ENCODE measurements at regions of chr10 and their contacts with region 1.

Region 1: DNA sequence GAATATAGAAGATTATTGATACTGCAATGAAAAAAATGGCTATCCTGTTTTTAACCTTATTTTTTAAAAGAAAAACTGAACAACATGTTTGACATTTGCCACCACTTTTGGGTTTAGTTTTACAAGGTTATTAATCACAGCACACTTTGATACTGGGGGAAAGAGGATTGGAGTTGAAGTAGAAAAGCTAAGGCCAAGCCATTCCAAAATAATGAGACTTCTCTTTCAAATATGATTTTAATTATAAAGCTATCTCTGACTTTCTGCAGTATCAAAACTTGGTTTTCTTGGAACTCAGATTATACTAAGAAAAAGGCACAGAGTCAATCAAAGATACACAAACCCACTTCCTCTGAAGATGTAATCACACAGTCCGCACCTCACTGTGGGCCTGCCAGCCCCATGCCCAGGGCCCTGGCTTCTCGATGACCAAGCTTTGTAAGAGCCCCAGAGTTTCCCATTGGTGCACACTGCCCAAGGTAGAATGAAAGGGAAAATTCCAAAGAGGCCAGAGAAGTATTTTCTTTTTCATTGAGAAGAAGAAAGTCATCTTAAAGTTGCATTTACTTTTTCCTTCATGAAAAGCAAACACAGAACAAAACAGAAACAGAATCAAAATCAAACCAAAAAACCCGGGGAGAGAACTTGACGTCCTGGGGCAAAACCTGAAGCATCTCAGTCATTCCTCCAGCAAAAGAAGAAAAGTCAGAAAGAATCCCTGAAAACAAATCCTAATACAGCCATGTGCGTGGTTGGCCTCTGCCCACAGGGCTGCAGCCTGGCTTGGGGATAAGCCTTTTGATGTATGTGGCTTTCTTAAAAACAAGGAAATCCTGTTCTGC is 187.7 kb upstream of the KLF6 start:
- DNase-seq: peak; percentile 68
- H3K4me3 Mint-ChIP-seq: peak overlapping the region; percentile 62
- H3K27ac Mint-ChIP-seq: peak overlapping the region; percentile 98
- H3K4me1 Mint-ChIP-seq: peaks cover 49% of the 10 kb centered on the region
- H3K27me3 Mint-ChIP-seq: no peaks in the 10 kb centered on the region

Region 2: DNA sequence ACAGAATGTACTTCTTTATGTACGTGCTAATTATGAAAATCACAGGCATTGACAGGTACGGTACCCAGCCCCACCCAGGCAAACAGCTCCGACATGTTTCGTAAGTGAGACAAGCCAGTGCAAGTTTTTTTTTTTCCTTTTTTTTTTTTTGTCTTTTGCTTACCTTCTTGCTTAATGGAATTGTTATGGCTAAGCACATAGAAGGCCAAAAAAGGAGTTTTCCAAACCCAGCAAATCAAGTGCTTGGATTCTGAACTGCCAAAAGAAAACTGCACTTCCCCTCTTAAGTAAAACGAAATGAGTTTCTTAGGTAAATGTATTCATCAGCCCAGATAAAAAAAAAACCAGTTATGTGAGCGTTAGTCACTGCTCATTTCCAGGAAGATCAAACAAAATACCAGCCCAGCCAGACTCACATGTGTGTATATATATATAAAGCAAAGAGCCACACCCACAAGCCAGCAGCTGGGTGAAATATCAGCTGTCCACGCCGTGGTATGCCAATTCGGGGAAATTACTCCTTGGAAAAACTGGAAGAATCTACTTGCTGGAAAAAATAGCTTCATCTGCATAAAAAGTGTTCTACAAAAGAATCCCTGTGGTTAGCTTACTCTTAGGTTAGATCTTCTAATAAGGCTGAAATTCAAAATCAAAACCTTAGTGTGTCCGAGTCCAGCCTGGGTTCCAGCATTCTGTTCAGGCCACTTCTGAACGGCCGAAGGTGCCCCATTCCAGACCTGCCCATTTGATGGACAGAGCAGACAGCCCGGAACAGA is 195.7 kb before region 1 on chr10:
- CTCF ChIA-PET with region 1: no interaction called
- POLR2A ChIA-PET with region 1: interaction called, 155 read pairs
- DNase-seq: peak; percentile 64
- H3K4me3 Mint-ChIP-seq: peak overlapping the region; percentile 47
- H3K27ac Mint-ChIP-seq: peak overlapping the region; percentile 58
- H3K4me1 Mint-ChIP-seq: peaks cover 69% of the 10 kb centered on the region
- H3K27me3 Mint-ChIP-seq: no peaks in the 10 kb centered on the region

Region 3: GRCh38 chr10:3935141-3935540 is 37.5 kb before region 1 on chr10:
- CTCF ChIA-PET with region 1: interaction called, 6 read pairs
- POLR2A ChIA-PET with region 1: interaction called, 14 read pairs
- DNase-seq: peak; percentile 81
- H3K4me3 Mint-ChIP-seq: peak overlapping the region; percentile 58
- H3K27ac Mint-ChIP-seq: peak overlapping the region; percentile 86
- H3K4me1 Mint-ChIP-seq: peaks cover 50% of the 10 kb centered on the region
- H3K27me3 Mint-ChIP-seq: no peaks in the 10 kb centered on the region

Region 4: GRCh38 chr10:3948843-3949242 is 23.8 kb before region 1 on chr10:
- CTCF ChIA-PET with region 1: interaction called, 3 read pairs
- POLR2A ChIA-PET with region 1: interaction called, 56 read pairs
- DNase-seq: peak; percentile 85
- H3K4me3 Mint-ChIP-seq: peak overlapping the region; percentile 70
- H3K27ac Mint-ChIP-seq: peak overlapping the region; percentile 90
- H3K4me1 Mint-ChIP-seq: peaks cover 73% of the 10 kb centered on the region
- H3K27me3 Mint-ChIP-seq: no peaks in the 10 kb centered on the region

Region 5: DNA sequence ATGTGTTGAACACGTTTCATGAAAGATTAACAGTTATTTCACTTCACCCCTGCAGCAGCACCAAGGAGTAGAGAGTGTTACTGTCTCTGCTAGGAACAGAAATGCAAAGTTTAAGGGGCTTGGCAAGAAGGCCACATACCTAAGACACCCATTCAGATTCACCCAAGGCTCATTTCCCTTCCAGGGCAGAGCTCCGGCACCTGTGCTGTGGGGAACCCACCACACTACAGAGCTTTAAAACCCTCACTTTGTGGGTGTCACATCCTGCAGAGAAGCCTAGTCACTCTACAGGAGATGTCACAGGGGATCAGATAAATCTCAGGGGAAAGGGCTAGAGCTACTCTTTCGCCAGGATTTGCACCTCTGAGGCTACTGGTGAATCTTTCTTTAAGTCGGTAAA is 11.6 kb before region 1 on chr10:
- CTCF ChIA-PET with region 1: interaction called, 10 read pairs
- POLR2A ChIA-PET with region 1: interaction called, 75 read pairs
- DNase-seq: peak; percentile 76
- H3K4me3 Mint-ChIP-seq: peak overlapping the region; percentile 18
- H3K27ac Mint-ChIP-seq: peak overlapping the region; percentile 80
- H3K4me1 Mint-ChIP-seq: peaks cover 49% of the 10 kb centered on the region
- H3K27me3 Mint-ChIP-seq: no peaks in the 10 kb centered on the region

Region 6: GRCh38 chr10:4131407-4132228 is 158.9 kb after region 1 on chr10:
- CTCF ChIA-PET with region 1: no interaction called
- POLR2A ChIA-PET with region 1: interaction called, 39 read pairs
- DNase-seq: peak; percentile 63
- H3K4me3 Mint-ChIP-seq: no peak overlapping the region
- H3K27ac Mint-ChIP-seq: no peak overlapping the region
- H3K4me1 Mint-ChIP-seq: peaks cover 41% of the 10 kb centered on the region
- H3K27me3 Mint-ChIP-seq: no peaks in the 10 kb centered on the region

Measured in activated CD4-positive, alpha-beta memory T cell treated with anti-CD3 and anti-CD28 coated beads, Interleukin-2, amount 10 ng/mL, durations not matched to agents 7 days and 5 days (primary cell).